Tibial artery (tissue), 4 donors: ENCODE measurements at regions of chr9 and their contacts with region 1.

Region 1: GRCh38 chr9:16496908-16497307 is 373.6 kb downstream of the BNC2 start:
- DNase-seq: no peak
- H3K4me3 ChIP-seq: no peak overlapping the region
- H3K27ac ChIP-seq: no peak overlapping the region
- H3K4me1 ChIP-seq: no peaks in the 10 kb centered on the region
- H3K27me3 ChIP-seq: no peaks in the 10 kb centered on the region
- CTCF ChIP-seq: no peak

Region 2: GRCh38 chr9:16180546-16180945 is 316.4 kb before region 1 on chr9:
- intact Hi-C with region 1: no loop called
- DNase-seq: no peak
- H3K4me3 ChIP-seq: no peak overlapping the region
- H3K27ac ChIP-seq: no peak overlapping the region
- H3K4me1 ChIP-seq: peaks cover 0 to 18% (median 0%) of the 10 kb centered on the region in 4 donors
- H3K27me3 ChIP-seq: no peaks in the 10 kb centered on the region
- CTCF ChIP-seq: no peak

Region 3: GRCh38 chr9:16445141-16445920 is 51.6 kb before region 1 on chr9:
- intact Hi-C with region 1: no loop called
- DNase-seq: no peak
- H3K4me3 ChIP-seq: no peak overlapping the region
- H3K27ac ChIP-seq: no peak overlapping the region
- H3K4me1 ChIP-seq: no peaks in the 10 kb centered on the region
- H3K27me3 ChIP-seq: no peaks in the 10 kb centered on the region
- CTCF ChIP-seq: no peak

Region 4: GRCh38 chr9:16553869-16554540 is 57.1 kb after region 1 on chr9:
- intact Hi-C with region 1: loop called (anchors 10 kb)
- DNase-seq: no peak
- H3K4me3 ChIP-seq: no peak overlapping the region
- H3K27ac ChIP-seq: no peak overlapping the region
- H3K4me1 ChIP-seq: no peaks in the 10 kb centered on the region
- H3K27me3 ChIP-seq: no peaks in the 10 kb centered on the region
- CTCF ChIP-seq: no peak